MCF 10A (cell line): ENCODE measurements at regions of chr14 and their contacts with region 1.

Region 1: DNA sequence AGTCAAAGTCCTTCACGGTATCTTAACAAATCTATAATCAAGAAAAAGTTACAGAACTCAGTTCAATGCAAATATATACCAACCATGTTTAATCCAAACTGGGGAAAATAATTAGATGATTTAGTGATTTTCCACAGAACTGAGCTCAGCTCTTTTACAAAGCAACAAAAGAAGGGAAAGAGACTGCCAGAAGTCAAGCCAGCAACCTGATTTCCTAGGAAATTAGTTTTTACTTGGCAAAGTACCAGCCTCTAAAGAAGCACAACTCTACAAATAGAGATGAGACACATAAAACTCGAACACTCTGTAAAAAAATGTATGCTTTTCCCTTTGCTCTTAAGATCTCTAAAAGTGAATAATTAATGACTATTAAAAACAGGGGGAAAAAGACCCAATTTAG is 19.4 kb downstream of the NUMB start:
- DNase-seq: no peak
- H3K4me3 Mint-ChIP-seq: no peak overlapping the region
- H3K27ac Mint-ChIP-seq: no peak overlapping the region
- H3K4me1 Mint-ChIP-seq: no peaks in the 10 kb centered on the region
- H3K27me3 Mint-ChIP-seq: no peaks in the 10 kb centered on the region
- CTCF ChIP-seq: no peak

Region 2: GRCh38 chr14:73452341-73453186 is 13.6 kb after region 1 on chr14:
- CTCF ChIA-PET with region 1: interaction called, 3 read pairs
- POLR2A ChIA-PET with region 1: interaction called, 11 read pairs
- intact Hi-C with region 1: no loop called
- DNase-seq: peak; percentile 88
- H3K4me3 Mint-ChIP-seq: peak overlapping the region; percentile 44
- H3K27ac Mint-ChIP-seq: peak overlapping the region; percentile 43
- H3K4me1 Mint-ChIP-seq: peaks cover 10% of the 10 kb centered on the region
- H3K27me3 Mint-ChIP-seq: no peaks in the 10 kb centered on the region
- CTCF ChIP-seq: no peak

Region 3: GRCh38 chr14:73458151-73458976 is 19.4 kb after region 1 on chr14 and contains the start of gene NUMB:
- CTCF ChIA-PET with region 1: interaction called, 3 read pairs
- POLR2A ChIA-PET with region 1: interaction called, 11 read pairs
- intact Hi-C with region 1: no loop called
- DNase-seq: peak; percentile 100
- H3K4me3 Mint-ChIP-seq: peak within 1 kb of the TSS; percentile 75
- H3K27ac Mint-ChIP-seq: peak within 1 kb of the TSS; percentile 98
- H3K4me1 Mint-ChIP-seq: peaks cover 33% of the 10 kb centered on the region
- H3K27me3 Mint-ChIP-seq: no peaks in the 10 kb centered on the region
- CTCF ChIP-seq: no peak
- total RNA-seq, gene NUMB: 81.5 and 88.5 TPM in 2 replicates